ENCODE measurements at regions of chr20 and their contacts with region 1.

Region 1: DNA sequence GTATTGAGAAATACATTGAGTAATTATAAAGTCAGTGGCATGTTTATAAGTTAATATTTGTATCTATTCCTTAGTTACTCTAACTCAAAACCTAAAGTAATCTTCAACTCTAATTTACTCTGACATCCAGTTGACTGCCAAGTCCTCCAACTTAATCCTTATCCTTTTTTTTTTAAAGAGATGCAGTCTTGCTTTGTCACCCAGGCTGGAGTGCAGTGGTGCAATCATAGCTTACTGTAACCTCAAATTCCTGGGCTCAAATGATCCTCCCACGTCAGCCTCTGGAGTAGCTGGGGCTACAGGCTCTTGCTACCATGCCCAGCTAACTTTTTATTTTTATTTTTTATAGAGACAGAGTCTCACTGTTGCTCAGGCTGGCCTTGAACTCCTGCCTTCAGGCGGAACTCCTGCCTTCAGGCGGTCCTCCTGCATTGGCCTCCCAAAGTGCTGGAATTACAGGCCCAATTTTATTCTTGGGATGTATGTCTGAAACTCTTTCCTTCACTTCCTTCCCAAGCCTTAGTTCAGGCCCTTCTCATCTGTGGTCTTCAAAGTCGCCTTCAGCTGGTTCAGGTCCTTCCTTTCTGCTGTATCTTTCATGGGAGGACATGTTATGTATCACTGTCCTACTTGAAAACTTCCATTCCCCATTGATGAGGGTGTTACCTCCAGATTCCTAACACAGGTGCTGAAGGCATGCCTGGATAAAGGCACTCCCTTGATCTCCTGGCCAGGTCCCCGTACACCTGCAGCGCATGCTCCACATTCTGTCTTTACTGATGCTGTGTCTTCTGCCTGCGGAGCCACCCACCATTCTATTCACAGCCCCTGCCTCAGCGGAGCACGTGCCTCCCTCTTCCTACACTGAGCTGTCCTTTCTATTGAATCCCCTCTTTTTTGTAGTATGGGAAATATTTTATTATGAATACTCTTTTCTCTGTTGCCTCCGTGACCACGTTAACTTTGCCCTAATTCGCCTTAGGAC is 24.7 kb downstream of the PTPN1 start:
- DNase-seq: peak; percentile 87
- ATAC-seq: peak; percentile 69
- H3K4me3 ChIP-seq: no peak overlapping the region
- H3K27ac ChIP-seq: peak overlapping the region; percentile 98
- H3K4me1 ChIP-seq: peaks cover 46% of the 10 kb centered on the region
- H3K27me3 ChIP-seq: no peaks in the 10 kb centered on the region
- CTCF ChIP-seq: no peak
- POLR2A ChIP-seq: no peak
- RAD21 ChIP-seq: no peak

Region 2: DNA sequence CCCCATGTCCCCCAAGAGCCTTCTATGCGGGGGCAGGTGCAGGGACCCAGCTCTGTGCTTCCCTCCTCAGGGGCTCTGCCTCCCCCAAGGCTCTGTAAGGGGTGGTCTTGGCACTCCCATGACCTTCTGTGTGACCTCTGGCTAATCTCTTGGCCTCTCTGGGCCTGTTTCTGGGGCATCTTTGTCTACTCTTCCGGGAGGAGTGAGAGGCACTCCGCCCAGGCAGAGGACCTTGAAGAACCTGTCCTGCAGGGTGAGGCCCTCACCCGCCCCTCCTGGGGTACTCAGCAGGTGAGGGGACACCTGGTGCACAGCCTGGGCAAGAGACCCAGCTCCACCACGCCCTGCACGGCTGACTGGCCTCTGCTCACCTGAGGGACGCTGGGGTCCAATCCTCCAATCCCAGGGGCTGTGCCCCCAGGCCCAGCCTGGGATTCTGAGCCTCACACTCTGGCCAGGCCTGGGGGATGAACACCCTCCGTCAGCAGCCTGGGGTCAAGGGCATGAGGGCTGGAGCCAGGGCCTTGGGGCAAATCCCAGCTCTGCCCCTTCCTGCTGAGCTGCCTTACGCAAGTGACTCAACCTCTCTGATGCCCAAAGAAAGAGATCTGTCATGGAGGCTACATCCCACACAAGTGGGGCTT is 174.7 kb before region 1 on chr20:
- CTCF ChIA-PET with region 1: no interaction called
- POLR2A ChIA-PET with region 1: no interaction called
- dilution Hi-C with region 1: no loop called
- in situ Hi-C with region 1: no loop called
- intact Hi-C with region 1: no loop called
- DNase-seq: no peak
- ATAC-seq: no peak
- H3K4me3 ChIP-seq: no peak overlapping the region
- H3K27ac ChIP-seq: no peak overlapping the region
- H3K4me1 ChIP-seq: no peaks in the 10 kb centered on the region
- H3K27me3 ChIP-seq: no peaks in the 10 kb centered on the region
- CTCF ChIP-seq: no peak
- POLR2A ChIP-seq: no peak
- RAD21 ChIP-seq: no peak

Region 3: GRCh38 chr20:50518270-50518721 is 16.6 kb before region 1 on chr20:
- CTCF ChIA-PET with region 1: interaction called, 4 read pairs
- POLR2A ChIA-PET with region 1: no interaction called
- dilution Hi-C with region 1: no loop called
- in situ Hi-C with region 1: no loop called
- intact Hi-C with region 1: loop called (anchors 2 kb)
- DNase-seq: peak; percentile 72
- ATAC-seq: peak; percentile 58
- H3K4me3 ChIP-seq: peak overlapping the region; percentile 22; the same call in 1 of the 2 replicates
- H3K27ac ChIP-seq: peak overlapping the region; percentile 80; the same call in 1 of the 2 replicates
- H3K4me1 ChIP-seq: peaks cover 28% of the 10 kb centered on the region
- H3K27me3 ChIP-seq: no peaks in the 10 kb centered on the region
- CTCF ChIP-seq: no peak
- POLR2A ChIP-seq: no peak
- RAD21 ChIP-seq: no peak

Region 4: DNA sequence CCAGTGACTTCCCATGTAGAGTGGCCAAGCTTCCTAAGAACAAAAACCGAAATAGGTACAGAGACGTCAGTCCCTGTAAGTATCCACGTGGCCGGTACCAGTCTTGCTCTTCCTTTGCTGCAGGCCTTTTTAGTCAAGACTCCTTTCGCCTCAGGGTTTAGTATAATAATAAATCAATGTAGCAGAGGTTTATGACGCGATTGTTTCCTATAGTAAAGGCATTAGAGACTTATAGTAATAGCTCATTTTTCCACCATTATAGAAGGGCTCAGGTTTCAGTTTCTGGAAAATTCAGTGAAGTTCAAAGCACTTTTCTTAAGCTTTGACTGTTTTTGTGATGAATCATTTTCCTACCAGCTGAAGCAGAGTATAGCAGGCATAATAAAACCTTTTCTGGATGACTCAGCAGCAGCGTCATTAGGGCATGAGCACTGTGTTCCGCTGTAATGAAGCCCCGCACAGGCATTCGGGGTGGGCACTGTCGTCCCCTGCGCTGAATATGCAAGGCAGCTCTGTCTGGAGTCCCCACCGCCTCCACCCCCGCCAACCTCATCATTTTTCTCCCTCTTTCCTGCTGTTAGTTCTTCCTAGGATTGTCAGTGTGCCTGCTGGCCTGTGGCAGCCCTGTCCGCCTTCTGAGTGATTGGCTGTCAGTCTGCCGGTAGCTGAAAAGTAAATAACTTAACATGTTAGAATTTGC is 26.7 kb after region 1 on chr20:
- CTCF ChIA-PET with region 1: interaction called, 4 read pairs
- POLR2A ChIA-PET with region 1: no interaction called
- dilution Hi-C with region 1: no loop called
- in situ Hi-C with region 1: no loop called
- intact Hi-C with region 1: loop called (anchors 1 kb)
- DNase-seq: peak; percentile 99
- ATAC-seq: peak; percentile 90
- H3K4me3 ChIP-seq: no peak overlapping the region
- H3K27ac ChIP-seq: peak overlapping the region; percentile 87
- H3K4me1 ChIP-seq: peaks cover 36% of the 10 kb centered on the region
- H3K27me3 ChIP-seq: no peaks in the 10 kb centered on the region
- CTCF ChIP-seq: no peak
- POLR2A ChIP-seq: no peak; the same call in 1 of the 2 replicates
- RAD21 ChIP-seq: peak; percentile 8; the same call in 1 of the 2 replicates